Endothelial cell of umbilical vein (primary cell): ENCODE measurements at regions of chr14 and their contacts with region 1.

Region 1: GRCh38 chr14:56474419-56475022 is 105.1 kb upstream of the TMEM260 start:
- DNase-seq: peak; percentile 54
- H3K4me3 ChIP-seq: no peak overlapping the region
- H3K27ac ChIP-seq: no peak overlapping the region
- H3K4me1 ChIP-seq: no peaks in the 10 kb centered on the region
- H3K27me3 ChIP-seq: peaks cover 0 to 8% of the 10 kb centered on the region in 2 experiments
- CTCF ChIP-seq: peak; percentile 63 to 64
- POLR2A ChIP-seq: no peak

Region 2: DNA sequence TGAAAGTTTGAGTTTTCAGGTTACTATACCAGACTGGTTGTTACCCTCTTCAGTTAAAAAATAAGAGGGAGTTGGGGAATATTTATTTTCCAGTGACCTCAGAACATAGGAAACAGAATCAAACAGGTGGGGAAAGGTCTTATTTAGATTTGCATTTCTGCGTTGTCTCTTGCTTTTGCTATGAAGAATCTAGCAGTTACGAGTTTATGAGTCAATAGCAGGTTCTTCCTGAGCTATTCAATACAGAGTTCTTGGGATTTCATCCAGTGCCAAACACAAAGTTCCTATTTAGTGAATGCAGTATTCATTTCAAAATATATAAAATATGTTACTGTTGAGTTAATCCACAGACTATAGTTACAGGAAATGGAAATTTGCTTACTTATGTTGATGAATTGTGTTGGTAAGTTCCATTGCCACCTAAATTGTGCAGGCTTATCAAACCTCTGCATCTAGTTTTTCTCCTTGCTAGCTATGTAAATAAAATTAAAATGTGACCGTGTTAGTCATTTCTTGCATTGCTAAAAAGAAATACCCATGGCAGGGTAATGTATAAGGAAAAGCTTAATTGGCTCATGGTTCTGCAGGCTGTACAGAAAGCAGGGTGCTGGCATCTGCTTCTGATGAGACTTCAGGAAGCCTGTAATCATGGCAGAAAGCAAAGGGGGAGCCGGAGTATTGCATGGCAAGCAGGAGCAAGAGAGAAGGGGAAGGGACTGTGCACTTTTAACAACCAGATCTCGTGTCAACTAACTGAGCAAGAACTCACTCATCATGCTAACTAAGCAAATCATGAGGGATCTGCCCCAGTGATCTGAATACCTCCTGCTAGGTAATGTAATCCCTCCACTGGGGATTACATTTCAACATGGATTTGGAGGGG is 784.3 kb before region 1 on chr14:
- CTCF ChIA-PET with region 1: interaction called, 13 read pairs
- POLR2A ChIA-PET with region 1: no interaction called
- dilution Hi-C with region 1: no loop called
- intact Hi-C with region 1: no loop called
- DNase-seq: peak; percentile 73
- H3K4me3 ChIP-seq: peak overlapping the region in 2 of 3 experiments; percentile 11 to 47
- H3K27ac ChIP-seq: peak overlapping the region; percentile 80
- H3K4me1 ChIP-seq: peaks cover 20% of the 10 kb centered on the region
- H3K27me3 ChIP-seq: no peaks in the 10 kb centered on the region
- CTCF ChIP-seq: no peak
- POLR2A ChIP-seq: no peak

Region 3: DNA sequence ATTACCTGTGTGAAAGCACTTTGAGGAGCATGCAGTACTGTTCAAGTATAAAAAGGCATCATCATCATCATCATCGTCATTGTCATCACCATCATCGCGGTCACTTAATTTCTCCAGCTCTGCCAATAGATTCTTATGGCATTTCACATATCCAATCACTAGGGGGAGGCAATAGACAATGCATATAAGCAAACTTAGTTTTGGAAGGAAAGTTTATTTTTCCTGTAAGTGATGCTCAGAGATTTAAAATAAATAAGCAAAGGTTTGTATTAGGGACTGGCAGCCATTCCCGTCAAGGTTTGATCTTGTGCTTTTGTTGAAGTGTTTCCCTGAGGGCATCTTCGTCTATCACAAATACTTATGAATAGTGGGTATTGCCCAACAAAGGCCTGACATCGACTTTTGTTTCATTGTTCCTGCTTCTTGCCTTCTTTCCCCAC is 767.1 kb before region 1 on chr14:
- CTCF ChIA-PET with region 1: interaction called, 66 read pairs
- POLR2A ChIA-PET with region 1: interaction called, 3 read pairs
- dilution Hi-C with region 1: loop called (anchors 10 kb)
- intact Hi-C with region 1: loop called (anchors 1 kb)
- DNase-seq: peak; percentile 51
- H3K4me3 ChIP-seq: no peak overlapping the region
- H3K27ac ChIP-seq: no peak overlapping the region
- H3K4me1 ChIP-seq: no peaks in the 10 kb centered on the region
- H3K27me3 ChIP-seq: no peaks in the 10 kb centered on the region
- CTCF ChIP-seq: peak; percentile 28 to 53
- POLR2A ChIP-seq: no peak

Region 4: DNA sequence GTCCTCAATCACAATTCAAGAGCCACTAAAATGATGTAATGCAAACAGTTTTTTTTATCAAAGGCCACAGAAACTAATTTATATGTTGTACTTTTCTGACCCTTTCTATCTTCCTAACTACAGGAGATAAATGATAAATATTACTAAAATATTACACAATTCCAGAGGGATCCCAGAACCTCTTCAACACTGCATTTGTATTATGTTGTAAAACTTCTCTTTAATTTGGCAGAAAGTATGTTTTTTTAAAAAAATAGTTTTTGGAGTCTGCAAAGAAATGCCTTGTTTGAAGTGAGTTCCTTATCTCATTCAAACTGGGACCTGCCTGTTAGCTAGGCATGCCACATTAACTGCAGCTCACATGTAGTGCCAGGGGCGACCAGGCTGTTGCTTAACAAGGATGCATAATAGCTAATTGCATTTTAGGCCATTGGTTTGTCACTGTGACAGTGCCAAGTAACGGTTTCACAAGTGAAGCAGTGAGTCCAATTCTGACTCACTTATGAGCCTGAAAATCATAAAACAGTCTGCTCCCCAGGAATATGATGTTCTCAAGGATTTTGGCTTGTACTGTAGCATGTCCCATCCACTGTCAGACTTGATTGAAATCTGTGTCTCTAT is 627.6 kb before region 1 on chr14:
- CTCF ChIA-PET with region 1: interaction called, 13 read pairs
- POLR2A ChIA-PET with region 1: no interaction called
- dilution Hi-C with region 1: no loop called
- intact Hi-C with region 1: loop called (anchors 5 kb)
- DNase-seq: no peak
- H3K4me3 ChIP-seq: no peak overlapping the region
- H3K27ac ChIP-seq: no peak overlapping the region
- H3K4me1 ChIP-seq: peaks cover 8% of the 10 kb centered on the region
- H3K27me3 ChIP-seq: no peaks in the 10 kb centered on the region
- CTCF ChIP-seq: no peak
- POLR2A ChIP-seq: no peak

Region 5: DNA sequence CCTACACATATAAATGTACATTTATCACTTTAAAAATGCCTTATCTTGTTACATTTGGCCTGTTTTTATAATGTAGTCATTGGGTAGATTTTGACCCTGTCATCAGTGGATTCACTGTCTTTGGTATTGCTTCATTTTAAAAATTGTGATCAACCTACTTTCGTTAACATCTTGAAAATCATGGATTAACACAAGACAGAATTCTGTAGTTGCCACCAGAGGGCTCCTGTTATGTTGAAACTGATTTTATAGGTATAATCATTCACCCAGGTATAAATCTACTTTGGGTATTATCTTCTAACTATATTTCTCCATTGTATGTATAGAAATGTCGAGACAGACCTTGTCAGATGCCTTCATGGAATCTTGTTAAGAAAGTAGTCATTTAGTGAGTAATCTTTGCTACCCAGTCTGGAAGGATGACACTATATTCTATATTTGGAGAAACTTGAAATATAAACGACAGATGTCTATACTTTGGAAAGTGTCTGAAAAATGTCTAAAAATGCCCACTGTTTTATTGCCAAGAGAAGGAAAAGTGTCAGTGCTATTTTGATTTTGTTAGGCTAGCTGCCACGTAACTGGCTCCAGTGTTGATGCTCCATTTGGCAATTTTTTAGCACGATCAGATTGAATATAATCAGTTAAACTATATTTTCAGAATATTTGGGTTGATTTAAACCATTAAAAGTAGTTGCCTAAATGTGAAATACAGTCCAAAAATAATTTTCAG is 226.9 kb before region 1 on chr14:
- CTCF ChIA-PET with region 1: no interaction called
- POLR2A ChIA-PET with region 1: no interaction called
- dilution Hi-C with region 1: no loop called
- intact Hi-C with region 1: loop called (anchors 1 kb)
- DNase-seq: peak; percentile 48
- H3K4me3 ChIP-seq: no peak overlapping the region
- H3K27ac ChIP-seq: no peak overlapping the region
- H3K4me1 ChIP-seq: no peaks in the 10 kb centered on the region
- H3K27me3 ChIP-seq: no peaks in the 10 kb centered on the region
- CTCF ChIP-seq: peak in 1 of 2 donors; percentile 7
- POLR2A ChIP-seq: no peak

Region 6: GRCh38 chr14:56422703-56423213 is 51.8 kb before region 1 on chr14:
- CTCF ChIA-PET with region 1: interaction called, 18 read pairs
- POLR2A ChIA-PET with region 1: no interaction called
- dilution Hi-C with region 1: no loop called
- intact Hi-C with region 1: loop called (anchors 5 kb)
- DNase-seq: peak; percentile 84
- H3K4me3 ChIP-seq: no peak overlapping the region
- H3K27ac ChIP-seq: no peak overlapping the region
- H3K4me1 ChIP-seq: no peaks in the 10 kb centered on the region
- H3K27me3 ChIP-seq: no peaks in the 10 kb centered on the region
- CTCF ChIP-seq: peak; percentile 59 to 71
- POLR2A ChIP-seq: no peak

Region 7: DNA sequence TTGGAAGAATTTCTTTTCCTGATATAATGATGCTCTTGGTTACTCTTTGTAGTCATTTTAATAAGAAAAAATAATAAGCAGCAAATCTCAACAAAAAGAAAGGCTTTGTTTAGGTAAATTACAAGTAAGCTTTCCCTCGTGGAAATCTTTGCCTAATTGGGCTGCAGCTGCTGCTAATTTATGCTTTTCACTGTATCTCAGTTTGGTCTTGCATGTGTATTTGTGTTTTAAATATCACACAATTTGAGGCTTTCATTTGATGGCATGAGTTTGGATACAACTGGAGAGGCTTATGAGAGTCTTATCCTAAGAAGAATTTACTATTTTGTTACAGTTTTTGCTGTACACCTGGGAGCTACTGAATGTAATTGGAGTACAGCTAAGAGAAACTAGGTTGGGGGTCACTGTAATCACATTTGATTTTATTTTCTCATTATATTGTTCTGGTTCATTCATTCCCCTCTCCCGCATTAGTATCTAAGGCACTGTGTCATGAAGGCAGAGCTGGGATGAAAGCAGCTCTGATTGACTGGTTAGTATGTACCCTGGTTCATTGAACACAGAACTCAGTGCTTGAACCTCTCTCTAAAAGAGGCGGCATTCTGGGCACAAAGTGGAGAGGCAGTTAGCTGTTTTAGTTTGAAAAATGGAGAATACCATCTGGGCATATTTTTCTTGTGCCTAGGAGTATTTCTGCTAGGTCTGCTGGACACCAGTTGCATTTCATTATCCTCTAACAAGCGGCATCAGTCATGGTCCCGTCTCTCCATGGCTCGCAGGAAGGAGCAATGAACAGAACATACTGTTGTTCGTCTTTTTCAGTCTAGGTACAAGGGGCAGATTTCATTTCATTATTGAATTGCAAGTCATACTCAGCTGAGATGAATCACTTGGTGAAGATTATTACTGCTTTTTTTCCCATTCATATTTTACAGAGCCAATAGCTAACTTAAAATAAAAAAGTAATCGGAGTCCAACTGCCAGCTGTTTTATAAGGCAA is 12.9 kb before region 1 on chr14:
- CTCF ChIA-PET with region 1: interaction called, 25 read pairs
- POLR2A ChIA-PET with region 1: no interaction called
- dilution Hi-C with region 1: no loop called
- intact Hi-C with region 1: no loop called
- DNase-seq: no peak
- H3K4me3 ChIP-seq: no peak overlapping the region
- H3K27ac ChIP-seq: no peak overlapping the region
- H3K4me1 ChIP-seq: no peaks in the 10 kb centered on the region
- H3K27me3 ChIP-seq: peaks cover 3 to 4% of the 10 kb centered on the region in 2 experiments
- CTCF ChIP-seq: no peak
- POLR2A ChIP-seq: no peak

Region 8: DNA sequence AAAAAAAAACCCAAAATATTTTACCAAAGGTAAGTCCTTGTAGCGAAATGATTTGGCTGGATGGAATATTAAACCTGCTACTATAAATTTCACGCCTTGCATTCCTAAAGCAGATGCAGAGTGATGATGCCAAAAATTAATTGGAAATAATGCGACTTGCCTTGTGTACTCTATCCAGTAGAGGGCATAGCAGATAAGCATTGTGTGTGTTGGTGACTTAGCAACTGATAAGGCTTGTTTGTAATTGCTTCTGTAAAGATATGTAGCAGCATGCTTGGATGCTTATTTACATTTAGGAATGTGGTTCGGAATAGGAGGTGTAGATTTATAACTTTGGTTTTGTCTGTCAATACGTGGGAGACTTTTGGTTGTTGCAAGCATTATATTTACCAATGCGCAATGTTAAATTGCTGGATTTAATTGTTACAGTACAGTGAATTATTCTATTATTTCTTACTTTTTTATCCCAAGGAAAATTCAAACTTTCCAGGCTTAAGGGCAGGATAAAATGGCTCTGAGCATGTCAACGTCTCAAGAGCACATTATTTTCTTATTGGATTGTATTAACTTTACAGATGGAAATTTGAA is 185.5 kb after region 1 on chr14:
- CTCF ChIA-PET with region 1: no interaction called
- POLR2A ChIA-PET with region 1: no interaction called
- dilution Hi-C with region 1: no loop called
- intact Hi-C with region 1: no loop called
- DNase-seq: peak; percentile 61
- H3K4me3 ChIP-seq: no peak overlapping the region
- H3K27ac ChIP-seq: no peak overlapping the region
- H3K4me1 ChIP-seq: no peaks in the 10 kb centered on the region
- H3K27me3 ChIP-seq: no peaks in the 10 kb centered on the region
- CTCF ChIP-seq: peak; percentile 50 to 64
- POLR2A ChIP-seq: no peak